ENCODE measurements at regions of chr16 and their contacts with region 1.

Region 1: GRCh38 chr16:21713549-21714368 is 50.0 kb downstream of the OTOA start:
- DNase-seq: no peak
- H3K4me3 ChIP-seq: no peak overlapping the region
- H3K27ac ChIP-seq: no peak overlapping the region
- H3K4me1 ChIP-seq: no peaks in the 10 kb centered on the region
- H3K27me3 ChIP-seq: no peaks in the 10 kb centered on the region
- CTCF ChIP-seq: no peak
- EP300 ChIP-seq: no peak
- POLR2A ChIP-seq: no peak

Region 2: DNA sequence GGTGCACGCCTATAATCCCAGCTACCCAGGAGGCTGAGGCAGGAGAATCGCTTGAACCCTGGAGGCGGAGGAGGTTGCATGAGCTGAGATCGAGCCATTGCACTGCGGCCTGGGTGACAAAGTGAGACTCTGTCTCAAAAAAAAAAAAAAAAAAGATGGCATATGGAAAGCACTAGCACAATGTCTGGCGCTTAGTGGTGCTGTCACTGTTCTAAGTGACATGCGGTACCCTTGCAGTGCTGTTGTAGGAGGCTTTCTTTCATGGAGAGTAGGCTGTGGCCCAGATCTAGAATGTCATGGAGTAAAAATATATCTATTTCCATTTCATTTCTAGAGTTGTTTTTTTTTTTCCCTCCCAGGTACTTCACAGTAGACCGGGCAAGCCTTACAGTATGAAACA is 128.9 kb before region 1 on chr16:
- intact Hi-C with region 1: loop called in 2 of 4 experiments (anchors 5 to 10 kb)
- DNase-seq: no peak
- H3K4me3 ChIP-seq: no peak overlapping the region
- H3K27ac ChIP-seq: no peak overlapping the region
- H3K4me1 ChIP-seq: no peaks in the 10 kb centered on the region
- H3K27me3 ChIP-seq: no peaks in the 10 kb centered on the region
- CTCF ChIP-seq: no peak
- EP300 ChIP-seq: no peak
- POLR2A ChIP-seq: no peak